B cell (primary cell): ENCODE measurements at regions of chr15 and their contacts with region 1.

Region 1: GRCh38 chr15:40274350-40275274 is 8.3 kb downstream of the ANKRD63 start:
- DNase-seq: peak; percentile 92
- ATAC-seq: peak; percentile 85
- H3K4me3 ChIP-seq: no peak overlapping the region
- H3K4me3 Mint-ChIP-seq: no peak overlapping the region
- H3K27ac ChIP-seq: no peak overlapping the region
- H3K27ac Mint-ChIP-seq: peak overlapping the region; percentile 68
- H3K4me1 ChIP-seq: peaks cover 6 to 18% of the 10 kb centered on the region in 2 donors
- H3K4me1 Mint-ChIP-seq: peaks cover 22% of the 10 kb centered on the region
- H3K27me3 ChIP-seq: peaks cover 0 to 28% (median 9%) of the 10 kb centered on the region in 4 experiments
- H3K27me3 Mint-ChIP-seq: peaks cover 18% of the 10 kb centered on the region
- CTCF ChIP-seq: peak; percentile 100

Region 2: DNA sequence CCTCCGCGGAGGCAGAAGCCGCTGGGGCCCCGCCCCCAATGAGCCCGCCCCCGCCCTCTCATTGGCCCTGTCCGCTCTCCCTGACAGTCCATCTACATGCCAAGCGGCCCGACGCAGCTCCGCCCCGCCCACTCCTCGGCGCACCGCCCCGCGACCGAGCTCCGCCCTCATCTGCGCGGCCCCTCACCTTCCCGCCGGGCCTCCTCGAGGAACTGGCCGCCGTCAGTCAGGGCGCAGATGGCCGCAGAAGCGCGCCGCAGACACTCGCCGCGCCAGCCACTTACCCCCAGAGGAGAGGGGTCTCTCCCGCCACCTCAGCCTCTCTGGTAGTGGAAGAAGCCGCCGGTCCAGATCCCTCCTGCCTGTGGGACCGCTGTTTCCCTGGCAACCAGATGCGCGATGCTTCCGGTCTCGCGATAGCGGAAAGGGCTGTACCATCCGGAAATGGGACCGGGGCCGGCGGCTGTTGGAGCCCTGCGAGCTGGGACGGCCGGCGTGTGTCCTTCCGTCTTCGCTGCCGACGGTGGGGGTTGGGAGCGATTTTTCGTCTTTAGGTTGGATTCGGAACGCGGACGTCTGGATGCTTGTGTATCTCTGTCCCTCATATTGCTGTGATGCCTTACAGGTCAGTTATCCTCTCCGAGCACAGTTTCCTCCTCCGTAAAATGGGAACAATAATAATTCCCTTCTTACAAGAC is 492.0 kb before region 1 on chr15 and contains the start of gene FSIP1:
- CTCF ChIA-PET with region 1: interaction called, 29 read pairs
- POLR2A ChIA-PET with region 1: no interaction called
- intact Hi-C with region 1: loop called (anchors 1 kb)
- DNase-seq: peak; percentile 98
- ATAC-seq: peak; percentile 99
- H3K4me3 ChIP-seq: peak within 1 kb of the TSS; percentile 81 to 98 (median 91)
- H3K4me3 Mint-ChIP-seq: peak within 1 kb of the TSS; percentile 85
- H3K27ac ChIP-seq: peak within 1 kb of the TSS; percentile 63 to 83
- H3K27ac Mint-ChIP-seq: peak within 1 kb of the TSS; percentile 97
- H3K4me1 ChIP-seq: peaks cover 17 to 18% of the 10 kb centered on the region in 2 donors
- H3K4me1 Mint-ChIP-seq: peaks cover 43% of the 10 kb centered on the region
- H3K27me3 ChIP-seq: peaks cover 0 to 5% (median under 1%) of the 10 kb centered on the region in 4 experiments
- H3K27me3 Mint-ChIP-seq: peaks cover 5% of the 10 kb centered on the region
- CTCF ChIP-seq: no peak
- total RNA-seq, gene FSIP1: 0.44 and 0.49 TPM in 2 replicates

Region 3: DNA sequence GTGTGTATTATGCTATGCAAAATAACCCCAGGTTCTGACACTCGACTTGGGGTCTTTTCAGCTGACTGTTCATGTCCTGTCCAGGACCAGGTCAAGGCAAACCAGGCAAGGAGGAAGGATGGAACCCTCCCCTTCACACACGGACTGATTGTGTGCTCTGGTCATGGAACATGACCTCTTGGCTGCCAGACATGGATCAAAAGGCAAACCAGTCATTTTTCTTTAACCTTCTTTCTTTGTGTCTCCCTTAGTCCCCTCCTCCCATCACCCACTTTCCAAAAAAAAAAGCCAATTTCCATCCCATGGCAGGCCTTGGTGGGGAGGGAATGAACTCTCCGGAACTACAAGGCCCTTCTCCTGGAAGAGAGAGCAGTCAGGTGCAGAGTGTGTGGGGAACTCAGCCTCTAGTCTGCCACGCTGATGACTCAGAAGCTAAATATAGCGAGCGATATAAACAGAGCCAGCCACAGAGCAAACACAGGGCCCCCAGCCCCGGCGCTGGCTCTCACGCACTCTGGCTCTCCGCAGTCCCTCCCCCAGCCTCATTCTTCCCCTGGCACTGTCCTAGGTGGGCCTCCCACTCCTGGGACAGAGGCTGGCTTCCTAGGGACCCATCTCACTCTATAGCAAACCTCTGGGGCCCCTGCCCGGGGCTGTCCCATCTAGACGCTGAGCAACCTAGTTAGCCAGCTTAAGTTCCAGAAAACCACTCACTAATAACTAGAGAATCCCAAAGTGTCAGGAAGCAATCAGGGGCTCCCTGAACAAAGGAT is 175.9 kb before region 1 on chr15:
- CTCF ChIA-PET with region 1: interaction called, 16 read pairs
- POLR2A ChIA-PET with region 1: no interaction called
- intact Hi-C with region 1: no loop called
- DNase-seq: peak; percentile 90
- ATAC-seq: peak; percentile 78
- H3K4me3 ChIP-seq: peak overlapping the region in 4 of 5 experiments; percentile 13 to 53 (median 24)
- H3K4me3 Mint-ChIP-seq: peak overlapping the region; percentile 85
- H3K27ac ChIP-seq: peak overlapping the region; percentile 99 to 100
- H3K27ac Mint-ChIP-seq: peak overlapping the region; percentile 95
- H3K4me1 ChIP-seq: peaks cover 100% of the 10 kb centered on the region in 2 donors
- H3K4me1 Mint-ChIP-seq: peaks cover 92% of the 10 kb centered on the region
- H3K27me3 ChIP-seq: no peaks in the 10 kb centered on the region
- H3K27me3 Mint-ChIP-seq: no peaks in the 10 kb centered on the region
- CTCF ChIP-seq: no peak

Region 4: DNA sequence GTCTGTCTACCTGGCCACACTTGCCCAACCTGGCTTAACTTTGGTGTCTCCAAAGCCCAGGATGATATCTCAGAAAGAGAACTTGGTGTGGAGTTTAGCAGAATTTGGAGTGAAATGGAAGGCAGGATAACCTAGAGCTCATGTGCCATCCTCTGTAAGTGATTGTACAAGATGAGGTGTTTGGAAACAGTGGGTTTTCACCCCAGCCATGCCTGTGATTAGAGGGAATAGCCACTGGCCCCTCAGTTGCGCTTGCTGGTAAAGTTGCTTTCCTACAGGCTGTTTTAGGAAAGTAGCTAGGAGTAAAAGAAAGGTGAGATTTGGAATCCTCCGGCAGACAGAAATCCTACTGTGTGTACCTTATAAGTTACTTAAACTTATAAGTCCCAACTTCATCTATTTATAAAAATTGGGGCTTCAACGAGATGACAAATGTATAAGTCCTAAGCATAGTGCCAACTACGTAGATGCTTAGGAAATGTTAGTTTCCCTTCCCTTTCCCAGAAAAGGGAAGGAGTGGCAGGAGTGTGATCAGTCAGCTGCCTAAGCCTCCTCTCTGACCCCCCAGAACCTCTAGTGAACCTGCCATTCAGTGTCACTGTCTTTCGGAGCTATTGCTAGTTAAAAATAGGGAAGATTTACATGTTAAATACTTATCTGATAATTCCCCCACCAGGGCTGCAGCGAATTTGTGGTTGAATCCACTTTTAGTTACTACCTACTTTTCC is 152.5 kb before region 1 on chr15:
- CTCF ChIA-PET with region 1: interaction called, 10 read pairs
- POLR2A ChIA-PET with region 1: no interaction called
- intact Hi-C with region 1: no loop called
- DNase-seq: no peak
- ATAC-seq: no peak
- H3K4me3 ChIP-seq: no peak overlapping the region
- H3K4me3 Mint-ChIP-seq: no peak overlapping the region
- H3K27ac ChIP-seq: no peak overlapping the region
- H3K27ac Mint-ChIP-seq: no peak overlapping the region
- H3K4me1 ChIP-seq: no peaks in the 10 kb centered on the region
- H3K4me1 Mint-ChIP-seq: no peaks in the 10 kb centered on the region
- H3K27me3 ChIP-seq: no peaks in the 10 kb centered on the region
- H3K27me3 Mint-ChIP-seq: no peaks in the 10 kb centered on the region
- CTCF ChIP-seq: no peak

Region 5: GRCh38 chr15:40238532-40239403 is 35.8 kb before region 1 on chr15 and contains the start of gene PAK6:
- CTCF ChIA-PET with region 1: interaction called, 22 read pairs
- POLR2A ChIA-PET with region 1: no interaction called
- intact Hi-C with region 1: no loop called
- DNase-seq: peak; percentile 74
- ATAC-seq: peak; percentile 39
- H3K4me3 ChIP-seq: peak within 1 kb of the TSS in 4 of 5 experiments; percentile 22 to 55 (median 34)
- H3K4me3 Mint-ChIP-seq: peak within 1 kb of the TSS; percentile 71
- H3K27ac ChIP-seq: peak within 1 kb of the TSS in 1 of 2 donors; percentile 44
- H3K27ac Mint-ChIP-seq: peak within 1 kb of the TSS; percentile 5
- H3K4me1 ChIP-seq: peaks cover 30 to 31% of the 10 kb centered on the region in 2 donors
- H3K4me1 Mint-ChIP-seq: peaks cover 36% of the 10 kb centered on the region
- H3K27me3 ChIP-seq: peaks cover 0 to 18% (median 6%) of the 10 kb centered on the region in 4 experiments
- H3K27me3 Mint-ChIP-seq: peaks cover 9% of the 10 kb centered on the region
- CTCF ChIP-seq: no peak
- total RNA-seq, gene PAK6: 0.80 and 1.2 TPM in 2 replicates

Region 6: GRCh38 chr15:40301467-40302179 is 27.0 kb after region 1 on chr15:
- CTCF ChIA-PET with region 1: interaction called, 227 read pairs
- POLR2A ChIA-PET with region 1: no interaction called
- intact Hi-C with region 1: no loop called
- DNase-seq: no peak
- ATAC-seq: no peak
- H3K4me3 ChIP-seq: no peak overlapping the region
- H3K4me3 Mint-ChIP-seq: no peak overlapping the region
- H3K27ac ChIP-seq: no peak overlapping the region
- H3K27ac Mint-ChIP-seq: no peak overlapping the region
- H3K4me1 ChIP-seq: peaks cover 7% of the 10 kb centered on the region in 2 donors
- H3K4me1 Mint-ChIP-seq: peaks cover 15% of the 10 kb centered on the region
- H3K27me3 ChIP-seq: no peaks in the 10 kb centered on the region
- H3K27me3 Mint-ChIP-seq: no peaks in the 10 kb centered on the region
- CTCF ChIP-seq: no peak

Region 7: DNA sequence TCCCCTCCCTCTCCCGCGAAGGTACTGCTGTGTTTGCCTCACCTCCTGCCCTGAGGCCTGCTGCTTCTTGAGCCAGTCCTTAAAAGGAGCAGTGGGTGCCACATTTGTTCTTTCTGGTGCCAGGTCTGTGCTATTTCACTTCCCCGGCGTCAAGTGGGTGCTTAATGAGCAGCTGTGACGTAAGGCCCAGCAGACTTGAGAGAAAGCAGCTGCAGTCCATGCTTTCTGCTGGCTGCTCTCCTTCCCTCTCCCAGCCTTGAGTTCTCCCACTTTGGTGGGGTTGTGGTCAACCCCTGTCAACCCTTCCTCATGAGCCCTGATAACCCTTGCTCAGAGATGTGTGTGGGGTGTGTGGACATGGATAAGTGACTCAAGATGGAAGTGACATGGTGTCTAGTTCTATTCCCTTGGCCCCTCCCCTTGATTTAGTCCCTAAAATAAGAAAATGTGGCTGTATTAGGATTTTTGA is 55.8 kb after region 1 on chr15:
- CTCF ChIA-PET with region 1: interaction called, 382 read pairs
- POLR2A ChIA-PET with region 1: interaction called, 3 read pairs
- intact Hi-C with region 1: no loop called
- DNase-seq: no peak
- ATAC-seq: no peak
- H3K4me3 ChIP-seq: no peak overlapping the region
- H3K4me3 Mint-ChIP-seq: no peak overlapping the region
- H3K27ac ChIP-seq: no peak overlapping the region
- H3K27ac Mint-ChIP-seq: no peak overlapping the region
- H3K4me1 ChIP-seq: peaks cover 21 to 22% of the 10 kb centered on the region in 2 donors
- H3K4me1 Mint-ChIP-seq: peaks cover 22% of the 10 kb centered on the region
- H3K27me3 ChIP-seq: no peaks in the 10 kb centered on the region
- H3K27me3 Mint-ChIP-seq: no peaks in the 10 kb centered on the region
- CTCF ChIP-seq: no peak

Region 8: GRCh38 chr15:40618906-40619305 is 344.3 kb after region 1 on chr15:
- CTCF ChIA-PET with region 1: no interaction called
- POLR2A ChIA-PET with region 1: no interaction called
- intact Hi-C with region 1: no loop called
- DNase-seq: no peak
- ATAC-seq: no peak
- H3K4me3 ChIP-seq: no peak overlapping the region
- H3K4me3 Mint-ChIP-seq: no peak overlapping the region
- H3K27ac ChIP-seq: no peak overlapping the region
- H3K27ac Mint-ChIP-seq: no peak overlapping the region
- H3K4me1 ChIP-seq: no peaks in the 10 kb centered on the region
- H3K4me1 Mint-ChIP-seq: peaks cover 4% of the 10 kb centered on the region
- H3K27me3 ChIP-seq: no peaks in the 10 kb centered on the region
- H3K27me3 Mint-ChIP-seq: no peaks in the 10 kb centered on the region
- CTCF ChIP-seq: no peak

Region 9: DNA sequence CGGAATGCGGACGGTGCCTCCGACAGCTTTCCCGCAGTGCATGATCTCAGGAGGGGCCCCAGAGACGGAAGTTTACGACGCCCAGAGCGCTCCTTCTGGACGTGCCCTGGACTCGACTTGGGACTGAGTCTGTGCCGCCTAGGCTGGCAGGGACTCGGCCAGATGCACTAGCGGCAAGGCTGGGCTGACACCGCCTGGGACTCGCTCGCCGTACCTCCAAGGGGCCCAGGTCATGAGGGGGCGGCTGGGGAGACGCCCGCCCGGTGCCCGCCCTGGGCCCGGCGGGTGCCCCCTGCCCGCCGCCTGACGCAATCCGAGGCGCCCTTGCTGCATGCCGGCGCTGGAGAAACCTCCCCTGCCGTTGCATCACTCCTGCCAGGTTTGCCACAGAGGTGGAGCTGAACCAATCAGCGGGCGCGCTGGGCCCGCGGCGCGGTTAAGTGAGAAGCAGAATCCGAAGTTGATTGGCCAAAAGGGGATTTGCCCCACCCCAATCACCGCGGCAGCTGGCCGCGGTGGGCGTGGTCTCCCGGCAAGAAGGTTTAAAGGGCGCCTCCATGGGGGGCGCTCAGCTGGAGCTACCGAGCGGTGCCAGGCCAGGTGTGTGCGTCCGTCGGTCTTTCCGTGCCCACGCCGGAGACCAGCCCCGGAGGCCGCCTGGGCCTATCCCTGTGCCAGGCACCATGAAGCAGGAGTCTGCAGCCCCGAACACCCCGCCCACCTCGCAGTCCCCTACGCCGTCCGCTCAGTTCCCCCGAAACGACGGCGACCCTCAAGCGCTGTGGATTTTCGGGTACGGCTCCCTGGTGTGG is 678.5 kb after region 1 on chr15 and contains the start of gene CHAC1:
- CTCF ChIA-PET with region 1: no interaction called
- POLR2A ChIA-PET with region 1: no interaction called
- intact Hi-C with region 1: no loop called
- DNase-seq: peak; percentile 95
- ATAC-seq: peak; percentile 97
- H3K4me3 ChIP-seq: peak within 1 kb of the TSS; percentile 40 to 74 (median 64)
- H3K4me3 Mint-ChIP-seq: peak within 1 kb of the TSS; percentile 93
- H3K27ac ChIP-seq: peak within 1 kb of the TSS in 1 of 2 donors; percentile 25
- H3K27ac Mint-ChIP-seq: peak within 1 kb of the TSS; percentile 84
- H3K4me1 ChIP-seq: peaks cover 9 to 14% of the 10 kb centered on the region in 2 donors
- H3K4me1 Mint-ChIP-seq: peaks cover 18% of the 10 kb centered on the region
- H3K27me3 ChIP-seq: peaks cover 0 to 14% (median 2%) of the 10 kb centered on the region in 4 experiments
- H3K27me3 Mint-ChIP-seq: peaks cover 9% of the 10 kb centered on the region
- CTCF ChIP-seq: no peak
- total RNA-seq, gene CHAC1: 3.1 and 3.6 TPM in 2 replicates